A673 (cell line): ENCODE measurements at regions of chr17 and their contacts with region 1.

Region 1: GRCh38 chr17:78497115-78497540 is 80.1 kb downstream of the DNAH17 start:
- DNase-seq: peak; percentile 82
- H3K4me3 ChIP-seq: no peak overlapping the region
- H3K27ac ChIP-seq: no peak overlapping the region
- H3K4me1 ChIP-seq: no peaks in the 10 kb centered on the region
- H3K27me3 ChIP-seq: no peaks in the 10 kb centered on the region
- CTCF ChIP-seq: peak; percentile 81

Region 2: GRCh38 chr17:78708510-78708973 is 211.4 kb after region 1 on chr17:
- CTCF ChIA-PET with region 1: interaction called, 38 read pairs
- POLR2A ChIA-PET with region 1: no interaction called
- intact Hi-C with region 1: loop called (anchors 1 kb)
- DNase-seq: peak; percentile 83
- H3K4me3 ChIP-seq: no peak overlapping the region
- H3K27ac ChIP-seq: no peak overlapping the region
- H3K4me1 ChIP-seq: no peaks in the 10 kb centered on the region
- H3K27me3 ChIP-seq: no peaks in the 10 kb centered on the region
- CTCF ChIP-seq: peak; percentile 96

Region 3: GRCh38 chr17:78798695-78799559 is 301.8 kb after region 1 on chr17:
- CTCF ChIA-PET with region 1: interaction called, 3 read pairs
- POLR2A ChIA-PET with region 1: no interaction called
- intact Hi-C with region 1: loop called (anchors 5 kb)
- DNase-seq: peak; percentile 47
- H3K4me3 ChIP-seq: no peak overlapping the region
- H3K27ac ChIP-seq: no peak overlapping the region
- H3K4me1 ChIP-seq: no peaks in the 10 kb centered on the region
- H3K27me3 ChIP-seq: no peaks in the 10 kb centered on the region
- CTCF ChIP-seq: peak; percentile 60